ENCODE measurements at regions of chr2 and their contacts with region 1.

Region 1: DNA sequence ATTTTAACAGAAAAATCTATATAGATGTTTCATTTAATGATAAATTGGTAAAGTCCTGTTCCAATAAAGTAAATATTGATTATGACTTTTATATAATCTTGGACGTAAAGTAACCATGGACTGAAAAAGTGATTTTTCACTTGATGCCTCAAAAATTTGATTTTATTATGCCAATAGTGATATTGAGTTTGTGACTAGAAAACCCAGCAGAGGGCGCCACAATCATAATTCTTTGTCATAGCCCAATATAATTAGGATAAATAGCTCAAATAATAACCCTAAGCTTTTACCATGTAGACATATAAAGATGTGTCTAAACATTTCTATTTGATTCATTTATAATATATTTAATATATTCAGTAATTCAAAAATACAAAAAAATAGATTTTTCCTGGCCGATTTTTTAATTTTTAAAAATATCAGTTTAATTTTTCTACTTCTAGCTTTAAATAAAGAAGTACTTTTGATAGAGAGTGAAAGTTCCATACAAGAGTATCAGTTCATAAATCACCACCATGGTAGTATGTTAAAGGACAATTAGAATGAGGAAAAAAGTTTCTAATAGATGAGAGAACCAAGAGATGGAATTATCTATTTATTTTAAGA is 30.7 kb downstream of the CAMKMT start:
- DNase-seq: peak in 1 of 2 experiments; percentile 46
- H3K4me3 ChIP-seq: no peak overlapping the region
- H3K27ac ChIP-seq: no peak overlapping the region
- H3K4me1 ChIP-seq: no peaks in the 10 kb centered on the region
- H3K27me3 ChIP-seq: no peaks in the 10 kb centered on the region
- CTCF ChIP-seq: peak; percentile 94

Region 2: GRCh38 chr2:43269074-43269572 is 1123.3 kb before region 1 on chr2:
- CTCF ChIA-PET with region 1: no interaction called
- POLR2A ChIA-PET with region 1: no interaction called
- intact Hi-C with region 1: no loop called
- DNase-seq: peak; percentile 32 to 59
- H3K4me3 ChIP-seq: no peak overlapping the region
- H3K27ac ChIP-seq: no peak overlapping the region
- H3K4me1 ChIP-seq: no peaks in the 10 kb centered on the region
- H3K27me3 ChIP-seq: no peaks in the 10 kb centered on the region
- CTCF ChIP-seq: no peak

Region 3: DNA sequence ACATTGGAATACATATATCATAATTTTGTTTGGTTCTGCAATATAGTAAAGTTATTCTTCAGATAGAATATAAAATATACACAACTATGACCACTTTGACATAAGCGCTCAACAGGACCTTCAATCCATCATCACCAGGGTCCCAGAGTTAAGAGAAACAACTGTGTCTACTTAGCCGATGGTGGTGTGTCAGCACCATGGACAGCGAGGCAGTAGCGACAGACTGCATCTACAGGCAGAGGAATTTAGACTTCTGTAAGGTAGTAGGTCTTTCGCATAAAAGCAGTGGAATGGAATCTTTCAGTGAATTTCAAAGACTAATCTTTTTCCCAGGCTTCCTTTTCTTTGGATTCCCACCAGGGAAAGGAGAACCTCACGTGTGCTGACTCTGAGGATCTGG is 376.2 kb before region 1 on chr2:
- CTCF ChIA-PET with region 1: no interaction called
- POLR2A ChIA-PET with region 1: no interaction called
- intact Hi-C with region 1: no loop called
- DNase-seq: peak in 1 of 2 experiments; percentile 49
- H3K4me3 ChIP-seq: no peak overlapping the region
- H3K27ac ChIP-seq: no peak overlapping the region
- H3K4me1 ChIP-seq: no peaks in the 10 kb centered on the region
- H3K27me3 ChIP-seq: peaks cover 78% of the 10 kb centered on the region
- CTCF ChIP-seq: no peak

Region 4: GRCh38 chr2:44859337-44859736 is 466.9 kb after region 1 on chr2:
- CTCF ChIA-PET with region 1: no interaction called
- POLR2A ChIA-PET with region 1: no interaction called
- intact Hi-C with region 1: no loop called
- DNase-seq: no peak
- H3K4me3 ChIP-seq: no peak overlapping the region
- H3K27ac ChIP-seq: no peak overlapping the region
- H3K4me1 ChIP-seq: no peaks in the 10 kb centered on the region
- H3K27me3 ChIP-seq: no peaks in the 10 kb centered on the region
- CTCF ChIP-seq: no peak

Region 5: DNA sequence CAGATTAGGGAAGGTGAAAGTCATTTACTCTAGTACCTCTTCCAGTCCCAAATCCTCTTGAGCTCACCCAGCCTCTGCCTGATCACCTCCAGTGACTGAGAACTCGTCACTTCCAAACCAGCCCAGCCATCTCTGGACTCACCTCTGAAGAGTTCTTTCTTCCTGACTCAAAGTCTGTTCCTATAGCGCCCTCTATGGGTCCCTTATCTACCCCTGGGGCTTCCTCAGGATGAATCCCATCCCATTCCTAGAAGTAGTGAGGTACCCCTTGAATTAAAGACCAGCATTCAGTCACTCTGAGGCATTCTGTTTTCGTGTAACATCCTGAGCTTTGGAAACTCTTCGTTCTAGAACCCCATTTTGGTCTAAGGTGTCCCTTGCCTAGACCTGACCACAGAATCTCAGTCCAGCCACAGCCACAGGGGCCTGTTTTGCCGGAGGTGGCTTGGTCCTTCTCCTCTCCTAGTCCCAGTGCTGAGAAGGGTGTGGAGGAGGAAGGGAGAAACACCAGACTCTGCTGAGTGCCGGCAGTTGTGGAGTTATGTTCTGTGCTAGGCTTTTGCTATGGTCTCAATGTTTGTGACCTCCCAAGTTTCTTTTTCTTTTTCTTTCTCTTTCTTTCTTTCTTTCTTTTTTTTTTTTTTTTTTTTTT is 581.7 kb after region 1 on chr2:
- CTCF ChIA-PET with region 1: interaction called, 6 read pairs
- POLR2A ChIA-PET with region 1: no interaction called
- intact Hi-C with region 1: loop called (anchors 1 kb)
- DNase-seq: peak; percentile 50 to 77
- H3K4me3 ChIP-seq: no peak overlapping the region
- H3K27ac ChIP-seq: no peak overlapping the region
- H3K4me1 ChIP-seq: no peaks in the 10 kb centered on the region
- H3K27me3 ChIP-seq: no peaks in the 10 kb centered on the region
- CTCF ChIP-seq: peak; percentile 88

Region 6: GRCh38 chr2:45930396-45930792 is 1538.0 kb after region 1 on chr2:
- CTCF ChIA-PET with region 1: no interaction called
- POLR2A ChIA-PET with region 1: no interaction called
- intact Hi-C with region 1: no loop called
- DNase-seq: no peak
- H3K4me3 ChIP-seq: no peak overlapping the region
- H3K27ac ChIP-seq: no peak overlapping the region
- H3K4me1 ChIP-seq: 0 out of 2 replicates have a peak, but pooled peaks cover 1% of the 10 kb centered on the region
- H3K27me3 ChIP-seq: no peaks in the 10 kb centered on the region
- CTCF ChIP-seq: no peak

Measured in PC-9 (cell line).